ENCODE measurements at regions of chr5 and their contacts with region 1.

Region 1: DNA sequence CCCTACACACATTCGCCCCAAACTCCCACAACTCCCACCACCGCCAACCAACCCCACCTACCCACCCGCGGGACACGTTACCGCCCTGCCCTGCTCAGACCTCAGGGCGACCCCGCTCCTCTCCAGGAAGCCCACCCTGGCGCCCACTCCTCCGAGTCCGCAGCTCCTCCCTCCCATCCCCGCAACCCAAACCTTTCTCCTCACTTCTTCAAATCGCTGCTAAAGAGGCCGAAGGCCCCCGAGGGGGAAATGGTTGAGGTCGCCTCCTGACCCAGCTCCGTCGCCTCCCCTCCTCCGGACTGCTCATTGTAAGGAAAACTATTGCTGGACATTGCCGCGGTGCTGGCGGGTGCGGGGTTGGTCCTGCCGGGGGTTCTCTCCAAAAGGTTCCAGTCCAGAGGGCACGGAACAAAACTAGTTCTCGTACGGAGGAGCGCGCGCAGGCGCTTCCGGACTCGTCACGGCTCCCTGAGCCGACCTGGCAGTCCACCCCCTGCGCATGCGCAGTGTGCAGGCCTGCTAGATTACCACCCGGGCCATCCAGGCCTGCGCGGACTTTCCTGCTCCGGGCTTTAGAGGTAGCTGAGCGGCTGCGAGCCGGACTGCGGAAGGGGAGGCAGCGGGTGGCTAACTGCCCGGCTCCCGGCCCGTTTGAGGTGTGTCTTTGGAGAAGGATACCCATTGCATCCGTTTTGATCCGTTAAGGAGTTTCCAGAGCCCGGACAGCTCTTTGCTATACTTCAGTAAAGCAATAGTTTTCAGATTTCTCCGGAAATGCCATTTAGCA is at the start of gene AP3B1:
- DNase-seq: peak; percentile 94 to 98 (median 97)
- H3K4me3 ChIP-seq: peak within 1 kb of the TSS; percentile 70 to 99 (median 92)
- H3K27ac ChIP-seq: peak within 1 kb of the TSS; percentile 71 to 96 (median 88)
- H3K27me3 ChIP-seq: no peaks in the 10 kb centered on the region
- CTCF ChIP-seq: peak in 35 of 56 donors; percentile 8 to 57 (median 33)
- total RNA-seq, gene AP3B1: 17.0 to 42.8 (median 27.9) TPM

Region 2: GRCh38 chr5:77852514-77853352 is 441.7 kb before region 1 on chr5:
- intact Hi-C with region 1: loop called in 1 of 2 experiments (anchors 10 kb)
- DNase-seq: peak; percentile 54 to 83 (median 67)
- H3K4me3 ChIP-seq: peak overlapping the region; percentile 41 to 78 (median 67)
- H3K27ac ChIP-seq: peak overlapping the region in 58 of 59 donors; percentile 1 to 94 (median 81)
- H3K27me3 ChIP-seq: peaks cover 0 to 12% (median 0%) of the 10 kb centered on the region in 45 donors
- CTCF ChIP-seq: peak in 1 of 56 donors; percentile 7

Region 3: DNA sequence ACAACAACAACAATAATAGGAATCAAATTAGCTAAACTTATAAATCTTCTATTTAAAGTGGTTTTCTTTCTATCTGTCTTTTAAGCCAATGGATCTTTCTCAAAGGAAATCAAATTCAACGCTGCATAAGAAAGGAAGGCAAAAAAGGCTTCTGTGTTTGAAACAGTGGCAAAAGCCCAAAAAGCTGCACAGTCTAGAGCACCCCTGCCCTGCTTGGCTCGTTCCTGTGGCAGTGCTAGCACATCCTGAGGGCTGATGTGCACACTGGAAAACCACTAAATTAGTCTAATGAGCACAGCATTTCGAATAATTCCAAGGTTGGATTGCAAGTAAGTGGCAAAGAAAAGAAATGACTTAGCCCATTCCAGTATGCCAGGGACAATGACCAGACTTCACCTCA is 80.6 kb before region 1 on chr5:
- intact Hi-C with region 1: loop called in 1 of 2 experiments (anchors 10 kb)
- DNase-seq: peak in 1 of 10 donors; percentile 37
- H3K4me3 ChIP-seq: peak overlapping the region in 3 of 59 donors; percentile 2 to 27 (median 13)
- H3K27ac ChIP-seq: peak overlapping the region in 4 of 59 donors; percentile 1 to 29 (median 23)
- H3K27me3 ChIP-seq: no peaks in the 10 kb centered on the region
- CTCF ChIP-seq: no peak

Region 4: DNA sequence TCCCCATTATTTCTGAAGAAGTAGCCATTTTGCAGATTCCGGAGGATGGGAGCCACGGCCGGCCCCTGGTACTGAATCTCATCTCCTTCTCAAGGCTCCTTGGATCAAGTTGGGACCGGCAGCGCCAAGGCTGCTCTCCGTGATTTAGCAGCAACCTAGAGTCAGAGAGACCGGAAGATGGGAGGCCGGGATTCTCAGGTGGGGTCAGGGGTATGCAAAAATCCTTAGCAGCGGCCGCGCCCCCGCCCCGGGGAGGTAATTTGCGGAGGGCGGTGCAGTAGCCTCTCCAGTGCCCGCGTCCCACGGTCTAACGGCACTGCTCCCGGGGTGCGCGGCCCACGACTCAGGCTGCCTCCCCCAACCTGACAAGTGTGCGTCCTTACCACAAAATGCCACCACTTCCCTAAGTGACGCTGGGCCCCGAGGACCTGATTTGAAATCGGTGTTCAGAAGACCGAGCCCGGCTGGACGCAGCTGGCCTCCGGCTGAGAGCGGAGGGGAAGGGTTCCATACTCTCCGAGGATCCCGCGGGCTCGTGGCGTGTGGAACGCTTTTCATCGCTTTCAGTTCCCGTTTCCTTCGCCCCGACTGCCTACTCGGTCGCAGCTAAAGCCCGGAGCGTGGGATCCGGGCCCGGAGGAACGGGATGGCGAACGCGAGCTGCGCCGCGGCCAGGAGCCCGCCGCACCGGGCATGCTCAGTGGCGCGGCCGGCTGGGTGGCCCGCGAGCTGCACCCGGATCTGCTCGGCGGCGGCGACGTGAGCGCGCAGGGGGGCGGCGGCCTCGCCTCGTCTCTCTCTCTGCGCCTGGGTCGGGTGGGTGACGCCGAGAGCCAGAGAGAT is 65.6 kb after region 1 on chr5 and contains the start of gene SCAMP1:
- intact Hi-C with region 1: loop called (anchors 1 kb)
- DNase-seq: peak; percentile 78 to 93 (median 86)
- H3K4me3 ChIP-seq: peak within 1 kb of the TSS; percentile 67 to 100 (median 97)
- H3K27ac ChIP-seq: peak within 1 kb of the TSS; percentile 72 to 98 (median 91)
- H3K27me3 ChIP-seq: no peaks in the 10 kb centered on the region
- CTCF ChIP-seq: peak in 42 of 56 donors; percentile 13 to 61 (median 37)
- total RNA-seq, gene SCAMP1: 54.8 to 153 (median 108) TPM

Measured in dorsolateral prefrontal cortex (tissue), 120 donors.